ENCODE measurements at regions of chrX and their contacts with region 1.

Region 1: GRCh38 chrX:50111742-50112141 is 89.1 kb downstream of the AKAP4 start:
- DNase-seq: no peak
- H3K4me3 ChIP-seq: no peak overlapping the region
- H3K4me3 Mint-ChIP-seq: no peak overlapping the region
- H3K27ac Mint-ChIP-seq: peak overlapping the region; percentile 69
- H3K4me1 ChIP-seq: peaks cover 84% of the 10 kb centered on the region
- H3K4me1 Mint-ChIP-seq: peaks cover 17% of the 10 kb centered on the region
- H3K27me3 ChIP-seq: no peaks in the 10 kb centered on the region
- H3K27me3 Mint-ChIP-seq: no peaks in the 10 kb centered on the region
- CTCF ChIP-seq: no peak

Region 2: GRCh38 chrX:50157545-50158135 is 45.9 kb after region 1 on chrX:
- CTCF ChIA-PET with region 1: no interaction called
- POLR2A ChIA-PET with region 1: no interaction called
- intact Hi-C with region 1: loop called (anchors 5 kb)
- DNase-seq: no peak
- H3K4me3 ChIP-seq: no peak overlapping the region
- H3K4me3 Mint-ChIP-seq: no peak overlapping the region
- H3K27ac Mint-ChIP-seq: no peak overlapping the region
- H3K4me1 ChIP-seq: no peaks in the 10 kb centered on the region; the same call in 1 of the 2 replicates
- H3K4me1 Mint-ChIP-seq: no peaks in the 10 kb centered on the region
- H3K27me3 ChIP-seq: no peaks in the 10 kb centered on the region
- H3K27me3 Mint-ChIP-seq: no peaks in the 10 kb centered on the region
- CTCF ChIP-seq: no peak

Region 3: DNA sequence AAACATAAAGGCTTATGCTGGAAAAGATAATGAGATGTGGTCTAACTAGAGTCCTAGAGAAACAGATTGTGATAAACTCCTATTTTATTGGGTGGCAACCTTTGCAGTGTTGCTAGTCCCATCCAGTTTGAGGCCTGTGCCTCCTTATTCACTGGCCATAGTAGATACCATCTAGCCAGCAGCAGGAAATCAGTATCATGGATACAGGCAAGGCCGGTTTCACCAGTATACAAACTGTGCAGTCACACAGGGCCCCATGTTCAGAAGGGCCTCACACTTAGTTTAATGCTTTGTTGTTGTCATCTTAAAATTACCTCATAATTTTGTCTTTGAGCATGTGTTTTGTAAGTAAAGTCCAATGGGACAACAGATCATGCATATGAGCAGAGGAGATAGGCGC is 311.1 kb after region 1 on chrX:
- CTCF ChIA-PET with region 1: no interaction called
- POLR2A ChIA-PET with region 1: no interaction called
- intact Hi-C with region 1: loop called (anchors 5 kb)
- DNase-seq: no peak
- H3K4me3 ChIP-seq: no peak overlapping the region
- H3K4me3 Mint-ChIP-seq: no peak overlapping the region
- H3K27ac Mint-ChIP-seq: peak overlapping the region; percentile 25
- H3K4me1 ChIP-seq: peaks cover 31% of the 10 kb centered on the region
- H3K4me1 Mint-ChIP-seq: peaks cover 6% of the 10 kb centered on the region
- H3K27me3 ChIP-seq: no peaks in the 10 kb centered on the region
- H3K27me3 Mint-ChIP-seq: no peaks in the 10 kb centered on the region
- CTCF ChIP-seq: no peak

Measured in Caco-2 (cell line).